ENCODE measurements at regions of chr2 and their contacts with region 1.

Region 1: DNA sequence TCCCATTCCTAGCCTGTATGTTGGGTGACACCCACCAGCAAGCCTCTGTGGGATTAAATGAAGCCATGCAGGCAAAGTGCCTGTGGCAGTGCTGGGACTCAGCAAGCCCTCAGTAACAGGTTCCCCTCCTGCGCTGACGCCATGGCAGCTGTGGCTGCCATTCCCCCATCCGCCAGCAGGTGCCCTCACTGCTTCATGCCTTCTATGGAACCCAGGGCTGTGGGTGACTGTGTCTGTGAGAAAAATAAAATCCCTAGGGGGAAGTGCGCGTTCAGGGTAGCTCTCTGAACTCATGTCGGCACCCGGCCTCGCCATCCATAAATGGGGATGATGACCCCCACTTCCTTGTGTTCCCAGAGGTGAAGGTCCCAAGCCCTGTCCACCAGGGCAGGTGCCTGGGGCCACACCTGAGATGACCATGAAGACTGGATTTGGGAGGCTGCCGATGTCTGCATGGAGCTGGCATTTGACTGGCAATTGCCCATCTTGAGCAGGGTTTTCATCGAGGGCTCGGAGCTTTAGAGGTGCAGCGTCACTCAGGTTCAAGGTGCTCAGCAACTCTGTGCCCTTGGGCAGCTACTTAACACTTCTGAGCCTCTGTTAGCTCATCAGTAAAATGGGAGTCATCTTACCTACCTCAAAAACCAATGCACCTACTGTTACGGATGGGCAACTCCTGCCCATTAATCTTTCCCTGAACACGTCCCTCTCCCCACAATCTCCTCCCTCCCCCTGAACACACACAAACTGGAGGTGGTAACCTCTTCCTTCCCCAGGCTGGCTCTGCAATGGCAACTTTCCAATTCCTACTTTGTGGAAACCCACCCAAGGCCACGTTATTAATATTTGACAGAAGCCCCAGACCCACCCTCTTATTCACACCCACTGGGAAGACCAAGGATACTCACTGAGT is 2.9 kb upstream of the MAL start:
- DNase-seq: peak; percentile 72 to 88 (median 80)
- ATAC-seq: peak; percentile 50 to 66
- H3K4me3 Mint-ChIP-seq: peak overlapping the region; percentile 81 to 100 (median 84)
- H3K27ac Mint-ChIP-seq: peak overlapping the region; percentile 47 to 99 (median 92)
- H3K4me1 Mint-ChIP-seq: peaks cover 36 to 56% (median 48%) of the 10 kb centered on the region in 4 donors
- H3K27me3 Mint-ChIP-seq: peaks cover 0 to 11% (median 0%) of the 10 kb centered on the region in 5 donors

Region 2: DNA sequence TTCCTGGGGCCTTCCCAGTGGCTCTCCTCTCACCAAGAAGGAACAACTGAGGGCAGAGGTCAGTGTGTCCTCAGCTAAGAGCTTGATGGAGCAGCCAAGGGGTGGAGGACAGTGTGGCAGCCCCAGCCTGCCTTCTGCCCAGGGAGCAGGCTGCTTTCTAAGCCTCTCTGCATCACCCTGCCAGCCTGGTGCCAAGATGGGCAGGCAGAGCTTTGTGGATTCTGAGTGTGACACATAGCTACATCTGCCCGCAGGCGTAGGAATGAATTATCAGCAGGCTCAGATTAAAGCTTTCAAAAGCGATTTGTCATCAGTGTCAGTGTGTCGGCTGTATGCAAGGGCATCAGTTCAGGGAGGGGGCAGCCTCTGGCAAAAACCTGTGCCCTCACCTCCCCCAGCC is 11.7 kb after region 1 on chr2:
- POLR2A ChIA-PET with region 1: interaction called, 22 read pairs
- DNase-seq: peak in 1 of 10 donors; percentile 43
- ATAC-seq: peak in 1 of 2 donors; percentile 25
- H3K4me3 Mint-ChIP-seq: peak overlapping the region in 6 of 10 donors; percentile 15 to 56 (median 42)
- H3K27ac Mint-ChIP-seq: peak overlapping the region; percentile 48 to 97 (median 74)
- H3K4me1 Mint-ChIP-seq: peaks cover 50 to 96% (median 86%) of the 10 kb centered on the region in 4 donors
- H3K27me3 Mint-ChIP-seq: no peaks in the 10 kb centered on the region

Region 3: GRCh38 chr2:95043300-95044093 is 20.9 kb after region 1 on chr2:
- POLR2A ChIA-PET with region 1: interaction called, 65 read pairs
- DNase-seq: peak in 1 of 10 donors; percentile 28
- ATAC-seq: peak; percentile 46 to 48
- H3K4me3 Mint-ChIP-seq: peak overlapping the region in 6 of 10 donors; percentile 23 to 69 (median 42)
- H3K27ac Mint-ChIP-seq: peak overlapping the region; percentile 66 to 92 (median 81)
- H3K4me1 Mint-ChIP-seq: peaks cover 49 to 98% (median 89%) of the 10 kb centered on the region in 4 donors
- H3K27me3 Mint-ChIP-seq: no peaks in the 10 kb centered on the region

Region 4: GRCh38 chr2:95053543-95053942 is 31.0 kb after region 1 on chr2:
- POLR2A ChIA-PET with region 1: interaction called, 234 read pairs
- DNase-seq: peak in 2 of 10 donors; percentile 43 to 46
- ATAC-seq: peak; percentile 47 to 61
- H3K4me3 Mint-ChIP-seq: peak overlapping the region in 9 of 10 donors; percentile 35 to 78 (median 68)
- H3K27ac Mint-ChIP-seq: peak overlapping the region; percentile 88 to 96 (median 94)
- H3K4me1 Mint-ChIP-seq: peaks cover 40 to 80% (median 70%) of the 10 kb centered on the region in 4 donors
- H3K27me3 Mint-ChIP-seq: no peaks in the 10 kb centered on the region

Region 5: DNA sequence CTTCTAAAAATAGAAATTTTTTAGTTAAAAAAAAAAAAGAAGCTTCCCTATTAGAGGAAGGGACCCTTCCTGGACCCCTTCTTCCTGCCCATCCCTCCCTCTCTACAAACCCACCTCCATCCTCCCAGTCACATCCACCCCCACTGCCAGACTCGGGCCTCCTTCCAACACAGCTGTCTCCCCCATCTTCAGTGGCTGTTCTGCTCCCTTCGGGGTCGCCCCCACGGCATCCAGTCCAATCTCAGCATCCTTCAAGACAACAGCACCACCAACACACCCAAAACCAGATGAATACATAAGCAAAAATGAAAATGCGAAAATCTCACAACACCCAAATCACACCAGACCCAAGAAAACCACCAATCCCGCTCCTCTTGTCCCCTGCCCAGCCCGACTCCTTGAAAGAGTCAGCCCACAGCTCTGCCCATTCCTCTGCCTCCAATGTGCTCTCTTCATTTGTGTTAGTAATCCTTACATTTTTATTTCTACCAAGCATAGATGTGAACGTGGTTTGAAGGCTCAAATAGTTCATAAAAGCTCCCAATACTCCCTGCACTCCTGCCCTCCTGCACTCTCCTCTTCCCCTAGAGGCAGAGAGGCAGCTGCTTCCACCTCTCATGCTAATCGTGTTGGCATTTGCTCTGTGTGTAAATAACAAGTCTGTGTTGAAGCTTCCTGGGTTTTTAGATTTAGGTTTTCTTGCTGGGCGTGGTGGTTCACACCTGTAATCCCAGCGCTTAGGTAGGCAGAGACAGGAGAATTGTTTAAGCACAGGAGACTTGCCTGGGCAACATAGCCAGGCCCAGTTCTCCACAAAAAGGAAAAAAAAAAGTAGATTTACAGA is 39.9 kb after region 1 on chr2:
- POLR2A ChIA-PET with region 1: interaction called, 234 read pairs
- DNase-seq: no peak
- ATAC-seq: peak; percentile 42 to 50
- H3K4me3 Mint-ChIP-seq: peak overlapping the region; percentile 20 to 77 (median 59)
- H3K27ac Mint-ChIP-seq: peak overlapping the region; percentile 66 to 96 (median 84)
- H3K4me1 Mint-ChIP-seq: peaks cover 24 to 40% (median 32%) of the 10 kb centered on the region in 4 donors
- H3K27me3 Mint-ChIP-seq: no peaks in the 10 kb centered on the region

Region 6: GRCh38 chr2:95115418-95115817 is 92.9 kb after region 1 on chr2:
- POLR2A ChIA-PET with region 1: interaction called, 106 read pairs
- DNase-seq: peak; percentile 52 to 88 (median 71)
- ATAC-seq: peak; percentile 99 to 100
- H3K4me3 Mint-ChIP-seq: no peak overlapping the region
- H3K27ac Mint-ChIP-seq: peak overlapping the region in 3 of 10 donors; percentile 53 to 75 (median 75)
- H3K4me1 Mint-ChIP-seq: peaks cover 18 to 45% (median 39%) of the 10 kb centered on the region in 4 donors
- H3K27me3 Mint-ChIP-seq: no peaks in the 10 kb centered on the region

Region 7: DNA sequence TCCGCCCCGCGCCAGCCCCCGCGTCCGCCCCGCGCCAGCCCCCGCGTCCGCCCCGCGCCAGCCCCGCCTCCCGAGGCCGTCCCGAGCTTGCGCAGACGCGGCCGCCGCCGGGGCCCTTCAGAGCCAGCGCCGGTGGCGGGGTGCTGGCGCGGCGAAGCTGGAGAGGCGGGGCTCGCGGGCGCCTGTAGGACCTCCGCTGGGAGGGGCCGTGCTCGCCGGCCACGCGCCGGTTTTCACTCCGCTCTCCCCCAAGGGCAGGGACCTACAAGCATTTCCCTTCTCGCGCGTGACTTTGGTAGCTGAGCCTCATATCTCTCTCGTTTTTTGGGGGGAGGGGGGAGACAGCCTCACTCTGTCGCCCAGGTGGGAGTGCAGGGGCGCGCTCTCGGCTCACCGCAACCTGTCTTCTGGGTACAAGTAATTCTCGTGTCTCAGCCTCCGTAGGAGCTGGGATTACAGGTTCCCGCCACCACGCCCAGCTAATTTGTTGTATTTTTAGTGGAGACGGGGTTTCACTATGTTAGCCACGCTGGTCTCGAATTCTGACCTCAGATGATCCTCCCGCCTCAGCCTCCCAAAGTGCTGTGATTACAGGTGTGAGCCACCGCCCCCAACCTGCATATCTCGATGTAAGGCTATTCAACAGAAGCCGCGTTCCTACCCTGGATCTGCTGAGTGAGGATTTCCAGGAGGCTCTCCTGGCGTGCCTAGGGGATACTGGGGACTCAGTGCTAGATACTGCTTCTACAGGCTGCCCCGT is 137.3 kb after region 1 on chr2 and contains the start of gene ZNF514:
- POLR2A ChIA-PET with region 1: interaction called, 14 read pairs
- DNase-seq: peak; percentile 69 to 81 (median 76)
- ATAC-seq: peak; percentile 84 to 88
- H3K4me3 Mint-ChIP-seq: peak within 1 kb of the TSS; percentile 86 to 95 (median 90)
- H3K27ac Mint-ChIP-seq: peak within 1 kb of the TSS; percentile 84 to 94 (median 92)
- H3K4me1 Mint-ChIP-seq: peaks cover 3 to 32% (median 29%) of the 10 kb centered on the region in 4 donors
- H3K27me3 Mint-ChIP-seq: no peaks in the 10 kb centered on the region
- polyA plus RNA-seq, gene ZNF514: 10.0 to 11.2 (median 10.3) TPM